ENCODE measurements at regions of chr12 and their contacts with region 1.

Region 1: DNA sequence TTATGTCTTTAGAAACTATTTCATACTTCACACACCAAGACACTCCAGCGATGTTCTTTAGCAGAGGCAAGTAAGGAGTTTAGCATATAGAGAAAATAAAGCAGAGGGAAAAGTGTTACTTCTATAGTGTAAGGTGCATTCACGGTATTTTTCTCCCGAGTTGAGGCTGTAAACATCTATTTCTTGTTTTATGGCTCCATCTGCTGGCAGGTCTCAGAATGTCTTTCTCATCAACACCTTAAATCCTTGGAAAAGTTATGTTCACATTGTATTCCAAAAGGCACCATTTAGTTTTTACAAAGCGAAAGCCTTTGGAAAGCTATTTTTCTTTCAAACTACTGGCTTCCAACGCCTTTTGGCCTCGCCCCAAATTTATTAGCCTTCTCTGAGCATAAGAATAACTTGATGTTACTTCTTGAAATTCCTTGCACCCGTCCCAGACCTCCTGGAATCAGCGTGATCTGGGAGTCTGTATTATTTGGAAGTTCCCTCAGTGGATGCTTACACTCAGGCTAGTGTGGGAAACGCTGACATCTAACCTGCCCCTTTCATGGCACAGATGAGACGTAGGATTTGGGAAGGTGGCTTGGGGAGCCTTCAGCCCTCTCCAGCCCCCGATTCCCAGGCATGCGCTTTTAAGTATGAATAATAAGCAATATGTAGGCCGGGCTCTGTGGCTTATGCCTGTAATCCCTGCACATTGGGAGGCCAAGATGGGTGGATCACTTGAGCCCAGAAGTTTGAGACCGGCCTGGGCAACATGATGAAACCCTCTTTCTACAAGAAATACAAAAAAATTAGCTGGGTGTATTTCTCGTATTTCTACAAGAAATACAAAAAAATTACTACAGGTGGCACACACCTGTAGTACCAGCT is 1.9 kb upstream of the PIWIL1 start:
- DNase-seq: no peak
- ATAC-seq: peak in 1 of 2 donors; percentile 54
- H3K4me3 ChIP-seq: no peak overlapping the region
- H3K27ac ChIP-seq: no peak overlapping the region
- H3K4me1 ChIP-seq: no peaks in the 10 kb centered on the region
- H3K27me3 ChIP-seq: peaks cover 21% of the 10 kb centered on the region
- CTCF ChIP-seq: peak; percentile 72

Region 2: GRCh38 chr12:130041983-130042812 is 293.6 kb before region 1 on chr12:
- intact Hi-C with region 1: loop called (anchors 10 kb)
- DNase-seq: peak; percentile 64
- ATAC-seq: peak; percentile 28 to 70
- H3K4me3 ChIP-seq: no peak overlapping the region
- H3K27ac ChIP-seq: no peak overlapping the region
- H3K4me1 ChIP-seq: no peaks in the 10 kb centered on the region
- H3K27me3 ChIP-seq: peaks cover 56% of the 10 kb centered on the region
- CTCF ChIP-seq: peak; percentile 87

Region 3: GRCh38 chr12:130413909-130414308 is 78.2 kb after region 1 on chr12:
- intact Hi-C with region 1: no loop called
- DNase-seq: no peak
- ATAC-seq: no peak
- H3K4me3 ChIP-seq: no peak overlapping the region
- H3K27ac ChIP-seq: no peak overlapping the region
- H3K4me1 ChIP-seq: no peaks in the 10 kb centered on the region
- H3K27me3 ChIP-seq: no peaks in the 10 kb centered on the region
- CTCF ChIP-seq: no peak